ENCODE measurements at regions of chr2 and their contacts with region 1.

Region 1: GRCh38 chr2:224520064-224520463 is 65.1 kb downstream of the CUL3 start:
- DNase-seq: peak; percentile 64
- H3K4me3 Mint-ChIP-seq: no peak overlapping the region
- H3K27ac Mint-ChIP-seq: peak overlapping the region; percentile 24
- H3K4me1 Mint-ChIP-seq: peaks cover 58% of the 10 kb centered on the region
- H3K27me3 Mint-ChIP-seq: no peaks in the 10 kb centered on the region

Region 2: GRCh38 chr2:224025874-224026273 is 494.2 kb before region 1 on chr2:
- CTCF ChIA-PET with region 1: no interaction called
- intact Hi-C with region 1: loop called (anchors 1 kb)
- DNase-seq: peak; percentile 84
- H3K4me3 Mint-ChIP-seq: peak overlapping the region; percentile 64
- H3K27ac Mint-ChIP-seq: peak overlapping the region; percentile 95
- H3K4me1 Mint-ChIP-seq: peaks cover 84% of the 10 kb centered on the region
- H3K27me3 Mint-ChIP-seq: no peaks in the 10 kb centered on the region

Region 3: DNA sequence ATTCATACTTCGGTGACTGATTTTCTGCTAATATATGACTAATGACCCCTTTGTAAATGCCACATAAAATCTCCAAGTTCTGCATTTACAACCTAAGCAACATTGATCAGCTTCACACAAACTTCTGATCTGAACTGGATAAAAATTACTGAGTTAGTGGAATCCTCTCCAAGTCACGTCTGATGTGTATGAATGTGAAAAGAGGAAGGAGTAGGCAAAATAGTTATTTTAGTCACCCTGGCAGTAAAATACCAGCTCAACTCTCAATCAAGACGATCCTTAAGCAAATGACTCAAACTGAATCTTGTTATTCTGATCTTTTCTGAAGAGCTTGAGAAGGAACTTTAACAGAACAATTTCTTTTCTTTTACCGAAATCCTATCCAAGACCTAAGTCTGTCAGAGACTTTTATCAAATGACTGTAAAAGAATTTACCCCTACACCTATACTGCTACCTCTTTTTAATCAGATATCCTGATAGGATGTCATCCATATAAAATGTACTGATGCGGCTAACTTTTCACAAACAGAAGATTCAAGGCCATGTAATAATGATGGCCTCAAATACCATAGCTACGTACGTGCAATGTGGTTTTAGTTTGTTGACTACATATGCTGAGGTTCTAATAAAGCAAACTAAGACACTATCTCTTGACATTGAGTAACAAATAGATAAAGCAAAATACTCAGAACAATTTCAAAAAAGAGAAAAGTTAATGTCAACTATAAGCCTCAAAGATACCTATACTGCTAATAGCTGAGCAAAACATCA is 41.4 kb after region 1 on chr2:
- CTCF ChIA-PET with region 1: interaction called, 3 read pairs
- intact Hi-C with region 1: loop called (anchors 1 kb)
- DNase-seq: no peak
- H3K4me3 Mint-ChIP-seq: no peak overlapping the region
- H3K27ac Mint-ChIP-seq: no peak overlapping the region
- H3K4me1 Mint-ChIP-seq: peaks cover 37% of the 10 kb centered on the region
- H3K27me3 Mint-ChIP-seq: no peaks in the 10 kb centered on the region

Region 4: DNA sequence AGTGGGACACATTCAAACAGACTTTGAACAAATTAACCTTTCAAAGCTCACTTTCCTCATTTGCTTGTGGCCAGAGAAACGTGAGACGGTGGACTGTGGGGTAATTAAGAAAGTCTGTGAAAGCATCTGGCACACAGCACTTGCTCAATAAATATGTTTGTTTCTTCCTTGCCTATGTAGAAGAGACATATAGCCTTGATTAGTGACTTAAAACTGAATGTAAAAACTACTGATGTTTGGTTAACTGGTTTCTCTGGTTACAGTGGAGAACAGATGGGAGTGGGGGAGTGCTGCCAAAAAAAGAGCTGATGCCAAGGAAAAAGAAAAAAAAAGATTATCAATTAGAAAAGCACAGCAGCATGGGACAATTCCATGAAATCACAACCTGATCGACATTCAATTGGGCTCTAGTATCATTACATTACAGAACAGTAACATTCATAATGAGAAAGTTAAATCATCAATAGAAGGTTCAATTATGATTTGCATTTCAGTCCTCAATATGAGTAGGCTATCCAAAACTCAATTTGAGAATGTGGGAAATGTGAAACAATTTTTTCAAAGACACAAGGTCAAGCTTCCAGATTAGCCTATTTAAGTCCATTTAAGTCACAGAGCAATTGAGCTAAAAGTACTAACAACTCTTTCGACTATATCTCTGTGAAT is 50.4 kb after region 1 on chr2:
- CTCF ChIA-PET with region 1: no interaction called
- intact Hi-C with region 1: loop called (anchors 2 kb)
- DNase-seq: no peak
- H3K4me3 Mint-ChIP-seq: no peak overlapping the region
- H3K27ac Mint-ChIP-seq: no peak overlapping the region
- H3K4me1 Mint-ChIP-seq: peaks cover 78% of the 10 kb centered on the region
- H3K27me3 Mint-ChIP-seq: no peaks in the 10 kb centered on the region

Region 5: DNA sequence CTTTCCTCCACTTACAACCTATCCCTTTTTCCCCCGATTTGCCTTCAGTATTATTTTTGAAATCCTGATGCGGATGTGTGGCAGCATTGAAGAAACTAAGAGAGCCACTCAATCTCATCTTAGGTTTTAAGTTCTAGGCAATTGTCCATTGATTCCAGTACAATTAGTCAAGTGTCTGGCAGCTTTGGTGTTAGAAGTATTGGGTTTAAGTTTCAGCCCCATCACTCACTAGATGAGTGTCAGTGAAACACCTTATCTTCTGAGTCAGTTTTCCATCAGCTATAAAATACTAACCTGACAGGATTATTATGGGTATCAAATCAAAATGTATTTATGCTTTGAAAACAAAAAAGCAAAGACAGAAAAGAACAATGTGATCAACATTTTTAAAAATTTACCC is 81.9 kb after region 1 on chr2:
- CTCF ChIA-PET with region 1: interaction called, 3 read pairs
- intact Hi-C with region 1: loop called (anchors 5 kb)
- DNase-seq: no peak
- H3K4me3 Mint-ChIP-seq: no peak overlapping the region
- H3K27ac Mint-ChIP-seq: no peak overlapping the region
- H3K4me1 Mint-ChIP-seq: peaks cover 18% of the 10 kb centered on the region
- H3K27me3 Mint-ChIP-seq: peaks cover 2% of the 10 kb centered on the region

Region 6: GRCh38 chr2:224820283-224820991 is 300.4 kb after region 1 on chr2:
- CTCF ChIA-PET with region 1: no interaction called
- intact Hi-C with region 1: no loop called
- DNase-seq: no peak
- H3K4me3 Mint-ChIP-seq: no peak overlapping the region
- H3K27ac Mint-ChIP-seq: no peak overlapping the region
- H3K4me1 Mint-ChIP-seq: peaks cover 3% of the 10 kb centered on the region
- H3K27me3 Mint-ChIP-seq: no peaks in the 10 kb centered on the region

Measured in activated naive CD4-positive, alpha-beta T cell treated with anti-CD3 and anti-CD28 coated beads for 36 hours (primary cell).